ENCODE measurements at regions of chr3 and their contacts with region 1.

Region 1: GRCh38 chr3:172511783-172512762 is 11.2 kb downstream of the TNFSF10 start:
- DNase-seq: peak; percentile 92
- H3K4me3 Mint-ChIP-seq: peak overlapping the region; percentile 68
- H3K27ac Mint-ChIP-seq: peak overlapping the region; percentile 93
- H3K4me1 Mint-ChIP-seq: peaks cover 82% of the 10 kb centered on the region
- H3K27me3 Mint-ChIP-seq: no peaks in the 10 kb centered on the region

Region 2: GRCh38 chr3:170815930-170816329 is 1696.1 kb before region 1 on chr3:
- CTCF ChIA-PET with region 1: no interaction called
- intact Hi-C with region 1: no loop called
- DNase-seq: no peak
- H3K4me3 Mint-ChIP-seq: no peak overlapping the region
- H3K27ac Mint-ChIP-seq: no peak overlapping the region
- H3K4me1 Mint-ChIP-seq: no peaks in the 10 kb centered on the region
- H3K27me3 Mint-ChIP-seq: peaks cover 2% of the 10 kb centered on the region

Region 3: GRCh38 chr3:172522871-172523818 is 11.1 kb after region 1 on chr3 and contains the start of gene TNFSF10:
- CTCF ChIA-PET with region 1: interaction called, 3 read pairs
- intact Hi-C with region 1: loop called (anchors 1 kb)
- DNase-seq: peak; percentile 78
- H3K4me3 Mint-ChIP-seq: peak within 1 kb of the TSS; percentile 96
- H3K27ac Mint-ChIP-seq: peak within 1 kb of the TSS; percentile 96
- H3K4me1 Mint-ChIP-seq: peaks cover 42% of the 10 kb centered on the region
- H3K27me3 Mint-ChIP-seq: no peaks in the 10 kb centered on the region
- total RNA-seq, gene TNFSF10: 31.8 to 32.7 TPM

Region 4: DNA sequence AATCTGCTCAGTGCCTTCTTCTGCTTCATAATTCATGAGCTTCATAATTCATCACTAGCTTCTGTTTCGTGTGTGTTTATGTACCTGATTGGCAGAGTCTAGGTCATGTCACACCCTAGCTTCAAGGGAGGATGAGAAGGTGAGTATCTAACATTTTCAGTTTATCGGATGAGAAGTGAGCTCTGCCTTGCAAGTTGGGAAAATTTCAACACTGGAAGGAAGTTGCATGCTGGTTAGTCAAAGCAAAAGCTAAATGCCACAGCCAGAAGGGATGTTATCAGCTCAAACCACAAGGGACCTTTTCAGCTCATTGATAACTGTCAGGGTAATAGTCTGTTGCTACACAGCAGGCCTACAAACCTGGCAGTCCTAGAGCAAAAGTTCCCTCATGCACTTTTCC is 18.5 kb after region 1 on chr3:
- CTCF ChIA-PET with region 1: interaction called, 15 read pairs
- intact Hi-C with region 1: loop called (anchors 1 kb)
- DNase-seq: peak; percentile 59
- H3K4me3 Mint-ChIP-seq: peak overlapping the region; percentile 22
- H3K27ac Mint-ChIP-seq: peak overlapping the region; percentile 75
- H3K4me1 Mint-ChIP-seq: peaks cover 22% of the 10 kb centered on the region
- H3K27me3 Mint-ChIP-seq: no peaks in the 10 kb centered on the region

Region 5: DNA sequence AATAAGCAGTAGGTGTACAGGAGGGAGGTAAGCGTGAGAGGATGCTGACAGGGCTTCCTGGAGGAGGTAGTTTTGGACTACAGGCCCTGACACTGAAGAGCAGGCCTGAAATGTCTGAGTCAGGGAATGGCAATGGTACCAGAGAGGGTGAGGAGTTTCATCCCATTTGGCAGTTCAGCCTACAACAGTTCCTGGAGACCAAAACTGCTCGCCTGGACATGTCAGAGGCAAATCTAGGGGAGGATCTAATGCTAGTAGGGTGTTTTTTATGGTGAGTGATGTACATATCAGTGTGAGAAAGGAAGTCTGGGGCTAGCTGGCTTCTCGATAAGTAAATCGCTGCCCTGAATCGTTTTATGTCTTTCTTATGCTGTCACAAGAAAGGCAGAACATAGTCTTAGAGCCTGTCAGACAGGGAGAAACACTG is 24.9 kb after region 1 on chr3:
- CTCF ChIA-PET with region 1: no interaction called
- intact Hi-C with region 1: loop called (anchors 1 kb)
- DNase-seq: peak; percentile 49
- H3K4me3 Mint-ChIP-seq: peak overlapping the region; percentile 8
- H3K27ac Mint-ChIP-seq: peak overlapping the region; percentile 91
- H3K4me1 Mint-ChIP-seq: peaks cover 40% of the 10 kb centered on the region
- H3K27me3 Mint-ChIP-seq: no peaks in the 10 kb centered on the region

Region 6: DNA sequence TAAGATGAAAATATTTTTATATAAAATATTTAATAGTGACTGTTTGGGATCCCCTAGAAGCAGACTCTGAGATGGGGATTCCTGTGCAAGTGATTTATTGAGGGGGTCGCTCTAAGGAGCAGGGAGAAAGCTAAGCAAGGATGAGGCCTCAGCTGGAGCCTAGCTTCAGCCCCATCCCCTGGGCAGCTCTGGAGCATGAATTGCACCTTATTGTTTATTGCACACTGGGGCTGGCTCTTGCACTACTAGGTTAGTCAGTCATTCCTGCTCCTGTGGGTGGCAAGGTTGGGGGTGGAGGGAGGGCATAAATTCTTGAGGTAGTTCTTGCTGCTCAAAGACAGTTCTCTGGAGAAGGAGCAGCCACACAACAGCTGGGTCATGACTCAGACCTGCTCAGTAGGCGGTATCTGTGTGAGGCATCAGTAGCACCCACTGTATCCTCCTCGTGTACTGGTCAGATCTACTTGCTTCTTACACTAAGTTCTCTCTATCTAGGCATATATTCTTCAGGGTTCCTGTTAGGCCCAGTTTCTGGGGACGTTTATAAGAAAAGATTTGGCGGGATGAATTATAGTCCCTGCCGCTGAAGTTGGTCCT is 38.4 kb after region 1 on chr3:
- CTCF ChIA-PET with region 1: no interaction called
- intact Hi-C with region 1: loop called (anchors 1 kb)
- DNase-seq: peak; percentile 91
- H3K4me3 Mint-ChIP-seq: no peak overlapping the region
- H3K27ac Mint-ChIP-seq: peak overlapping the region; percentile 42
- H3K4me1 Mint-ChIP-seq: peaks cover 46% of the 10 kb centered on the region
- H3K27me3 Mint-ChIP-seq: no peaks in the 10 kb centered on the region

Region 7: GRCh38 chr3:172708921-172709773 is 197.1 kb after region 1 on chr3:
- CTCF ChIA-PET with region 1: no interaction called
- intact Hi-C with region 1: no loop called
- DNase-seq: no peak
- H3K4me3 Mint-ChIP-seq: no peak overlapping the region
- H3K27ac Mint-ChIP-seq: no peak overlapping the region
- H3K4me1 Mint-ChIP-seq: peaks cover 11% of the 10 kb centered on the region
- H3K27me3 Mint-ChIP-seq: no peaks in the 10 kb centered on the region

Region 8: GRCh38 chr3:172726382-172726781 is 214.3 kb after region 1 on chr3:
- CTCF ChIA-PET with region 1: no interaction called
- intact Hi-C with region 1: no loop called
- DNase-seq: no peak
- H3K4me3 Mint-ChIP-seq: no peak overlapping the region
- H3K27ac Mint-ChIP-seq: no peak overlapping the region
- H3K4me1 Mint-ChIP-seq: no peaks in the 10 kb centered on the region
- H3K27me3 Mint-ChIP-seq: no peaks in the 10 kb centered on the region

Measured in activated naive CD4-positive, alpha-beta T cell treated with anti-CD3 and anti-CD28 coated beads for 36 hours (primary cell).